ENCODE measurements at regions of chr1 and their contacts with region 1.

Region 1: DNA sequence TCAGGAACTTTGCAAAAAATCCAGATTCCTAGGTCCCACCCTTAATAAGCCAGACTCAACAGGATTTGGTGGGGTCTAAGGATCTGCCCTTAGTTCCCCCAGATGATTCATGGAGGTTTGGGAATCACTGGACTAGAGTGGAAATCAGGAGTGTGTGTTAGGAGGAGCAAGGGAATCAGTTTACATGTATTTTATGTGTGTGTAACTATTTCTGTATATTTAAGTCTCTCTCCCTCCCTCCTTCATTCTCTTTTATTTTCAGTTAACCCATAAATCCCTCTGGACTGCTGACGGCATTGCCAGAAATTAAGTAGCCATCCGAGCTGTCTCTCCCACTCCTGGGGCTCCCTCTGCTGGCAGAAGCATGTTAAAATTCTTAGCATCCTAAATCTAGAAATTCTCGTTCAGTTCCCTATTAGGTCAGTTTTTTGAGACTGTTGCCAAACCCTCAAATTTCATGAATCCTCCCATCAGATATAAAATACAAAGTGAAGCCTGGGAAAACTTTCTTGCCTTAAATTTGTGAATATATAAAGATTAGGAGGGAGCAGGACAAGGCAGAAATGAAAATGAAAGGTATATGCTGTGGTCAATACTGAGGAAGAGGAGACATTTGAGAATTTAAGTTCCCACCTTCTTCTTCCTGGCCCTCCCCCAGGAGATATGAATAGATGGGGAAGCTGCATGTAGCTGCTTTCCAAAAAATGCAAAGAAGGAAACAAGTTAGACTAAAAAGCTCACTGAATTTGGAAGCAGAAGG is 11.7 kb upstream of the HSD11B1 start:
- DNase-seq: peak; percentile 50
- H3K4me3 Mint-ChIP-seq: no peak overlapping the region
- H3K27ac Mint-ChIP-seq: peak overlapping the region; percentile 53
- H3K4me1 Mint-ChIP-seq: peaks cover 43% of the 10 kb centered on the region
- H3K27me3 Mint-ChIP-seq: no peaks in the 10 kb centered on the region

Region 2: DNA sequence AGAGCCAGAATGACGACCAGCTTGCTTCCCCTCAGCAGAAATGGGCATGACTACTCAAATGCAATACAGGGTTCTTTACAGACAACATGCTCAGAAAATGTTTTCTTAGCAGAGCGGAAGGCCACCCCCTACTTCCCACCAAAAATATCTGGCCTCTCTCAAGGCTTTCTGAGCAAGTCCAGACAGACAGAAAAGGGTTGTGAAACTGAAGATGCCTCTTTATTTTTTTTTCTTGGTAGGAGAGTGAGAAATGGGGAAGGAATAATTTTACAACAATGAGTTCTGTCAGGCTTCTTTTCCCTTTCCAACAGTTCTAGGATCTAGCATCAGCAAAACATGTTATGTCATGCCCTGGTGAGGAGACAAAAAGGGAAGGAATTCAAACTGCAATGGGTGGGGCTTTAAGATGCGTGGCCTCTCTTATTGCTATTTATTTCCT is 281.4 kb before region 1 on chr1:
- intact Hi-C with region 1: no loop called
- DNase-seq: no peak
- H3K4me3 Mint-ChIP-seq: no peak overlapping the region
- H3K27ac Mint-ChIP-seq: no peak overlapping the region
- H3K4me1 Mint-ChIP-seq: no peaks in the 10 kb centered on the region
- H3K27me3 Mint-ChIP-seq: peaks cover 21% of the 10 kb centered on the region

Region 3: DNA sequence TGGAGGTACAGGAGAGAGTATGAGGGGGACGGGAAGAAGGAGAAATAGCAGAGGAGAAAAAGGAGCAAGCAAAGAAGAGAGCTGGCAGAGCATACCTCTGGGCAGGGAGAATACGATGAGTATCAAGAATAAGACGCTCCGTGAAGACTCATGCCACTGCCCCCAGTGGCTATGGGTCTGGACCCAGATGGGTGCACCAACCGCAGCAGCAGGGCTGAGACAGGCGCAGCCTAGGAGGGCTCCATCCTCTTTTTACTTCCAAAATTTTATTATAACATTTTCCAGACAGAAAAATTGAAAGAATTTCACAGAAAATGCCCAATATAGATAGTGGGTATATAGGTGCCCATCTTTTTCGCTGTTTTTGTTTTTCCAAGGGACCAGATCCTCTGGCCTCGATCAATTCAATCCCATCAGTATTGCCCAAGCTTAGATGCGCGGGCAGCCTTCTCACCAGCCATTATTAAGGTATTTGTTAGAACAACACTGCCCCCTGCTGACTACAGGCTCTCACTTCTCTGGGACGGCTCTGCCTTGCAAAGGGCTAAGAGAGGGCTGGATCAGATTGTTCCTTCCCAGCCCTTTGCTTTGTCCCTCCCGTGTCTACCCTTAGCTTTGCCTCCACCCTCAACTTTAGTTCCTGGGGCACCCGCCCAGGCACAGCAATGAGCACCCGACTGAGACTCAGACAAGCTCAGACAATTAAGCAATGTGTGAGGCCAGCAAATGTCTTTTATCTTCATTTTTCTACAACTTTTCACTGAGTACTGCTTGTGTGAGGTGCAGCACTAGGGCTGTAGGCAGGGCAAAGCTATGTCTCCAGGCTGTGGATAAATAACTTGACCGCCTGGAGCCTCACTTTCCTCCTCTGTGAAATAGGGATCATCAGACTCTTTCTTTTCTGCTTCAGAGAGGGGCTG is 126.9 kb before region 1 on chr1:
- intact Hi-C with region 1: loop called (anchors 2 kb)
- DNase-seq: peak; percentile 57
- H3K4me3 Mint-ChIP-seq: no peak overlapping the region
- H3K27ac Mint-ChIP-seq: no peak overlapping the region
- H3K4me1 Mint-ChIP-seq: peaks cover 19% of the 10 kb centered on the region
- H3K27me3 Mint-ChIP-seq: peaks cover 17% of the 10 kb centered on the region

Region 4: DNA sequence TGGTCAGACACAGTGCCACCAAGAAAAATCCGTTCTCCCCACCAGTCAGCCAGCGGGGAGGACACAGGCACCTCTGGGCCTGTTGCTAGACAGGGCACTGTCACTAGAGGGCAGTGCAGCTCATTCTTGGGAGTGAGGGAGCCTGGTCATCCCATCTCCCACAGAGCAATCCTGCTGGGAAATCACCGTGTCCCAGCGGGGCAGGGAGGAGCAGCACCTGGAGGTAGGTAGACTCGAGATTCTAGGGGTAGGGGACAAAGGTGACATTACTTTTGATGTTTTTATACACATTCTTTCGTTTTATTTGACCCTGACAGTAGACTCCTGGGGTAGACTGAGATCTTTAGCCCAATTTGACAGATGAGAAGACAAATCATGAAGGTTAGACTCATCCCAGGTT is 116.1 kb before region 1 on chr1:
- intact Hi-C with region 1: loop called (anchors 2 kb)
- DNase-seq: peak; percentile 43
- H3K4me3 Mint-ChIP-seq: no peak overlapping the region
- H3K27ac Mint-ChIP-seq: no peak overlapping the region
- H3K4me1 Mint-ChIP-seq: peaks cover 2% of the 10 kb centered on the region
- H3K27me3 Mint-ChIP-seq: peaks cover 23% of the 10 kb centered on the region

Region 5: GRCh38 chr1:209601809-209602657 is 90.9 kb before region 1 on chr1:
- intact Hi-C with region 1: loop called (anchors 1 kb)
- DNase-seq: no peak
- H3K4me3 Mint-ChIP-seq: no peak overlapping the region
- H3K27ac Mint-ChIP-seq: no peak overlapping the region
- H3K4me1 Mint-ChIP-seq: peaks cover 4% of the 10 kb centered on the region
- H3K27me3 Mint-ChIP-seq: peaks cover 27% of the 10 kb centered on the region

Region 6: DNA sequence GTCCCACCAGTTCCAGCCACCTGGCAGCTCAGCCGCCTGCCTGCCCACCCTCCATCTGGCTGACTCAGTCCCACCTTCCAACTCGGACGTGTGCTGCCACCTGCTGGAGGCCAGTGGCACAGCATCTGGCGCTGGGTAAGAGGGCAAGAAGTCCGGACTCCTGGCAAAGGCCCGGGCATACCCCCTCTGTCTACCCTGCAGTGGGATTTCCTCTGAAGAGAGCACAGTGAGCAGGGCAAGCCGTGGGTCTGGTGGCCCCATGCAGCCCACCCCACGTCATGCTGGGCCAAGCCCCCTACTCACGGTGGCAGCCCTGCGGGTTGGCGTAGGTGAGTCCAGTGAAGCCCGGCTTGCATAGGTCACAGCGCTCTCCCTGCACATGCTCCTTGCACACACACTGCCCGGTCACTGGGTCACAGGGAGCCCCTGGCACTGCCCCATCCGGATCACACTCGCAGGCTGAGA is 65.2 kb before region 1 on chr1:
- intact Hi-C with region 1: loop called (anchors 1 kb)
- DNase-seq: peak; percentile 63
- H3K4me3 Mint-ChIP-seq: no peak overlapping the region
- H3K27ac Mint-ChIP-seq: no peak overlapping the region
- H3K4me1 Mint-ChIP-seq: peaks cover 4% of the 10 kb centered on the region
- H3K27me3 Mint-ChIP-seq: peaks cover 2% of the 10 kb centered on the region

Region 7: GRCh38 chr1:209651148-209651547 is 41.8 kb before region 1 on chr1:
- intact Hi-C with region 1: loop called (anchors 5 kb)
- DNase-seq: peak; percentile 65
- H3K4me3 Mint-ChIP-seq: no peak overlapping the region
- H3K27ac Mint-ChIP-seq: peak overlapping the region; percentile 83
- H3K4me1 Mint-ChIP-seq: peaks cover 55% of the 10 kb centered on the region
- H3K27me3 Mint-ChIP-seq: no peaks in the 10 kb centered on the region